ENCODE measurements at regions of chr16 and their contacts with region 1.

Region 1: DNA sequence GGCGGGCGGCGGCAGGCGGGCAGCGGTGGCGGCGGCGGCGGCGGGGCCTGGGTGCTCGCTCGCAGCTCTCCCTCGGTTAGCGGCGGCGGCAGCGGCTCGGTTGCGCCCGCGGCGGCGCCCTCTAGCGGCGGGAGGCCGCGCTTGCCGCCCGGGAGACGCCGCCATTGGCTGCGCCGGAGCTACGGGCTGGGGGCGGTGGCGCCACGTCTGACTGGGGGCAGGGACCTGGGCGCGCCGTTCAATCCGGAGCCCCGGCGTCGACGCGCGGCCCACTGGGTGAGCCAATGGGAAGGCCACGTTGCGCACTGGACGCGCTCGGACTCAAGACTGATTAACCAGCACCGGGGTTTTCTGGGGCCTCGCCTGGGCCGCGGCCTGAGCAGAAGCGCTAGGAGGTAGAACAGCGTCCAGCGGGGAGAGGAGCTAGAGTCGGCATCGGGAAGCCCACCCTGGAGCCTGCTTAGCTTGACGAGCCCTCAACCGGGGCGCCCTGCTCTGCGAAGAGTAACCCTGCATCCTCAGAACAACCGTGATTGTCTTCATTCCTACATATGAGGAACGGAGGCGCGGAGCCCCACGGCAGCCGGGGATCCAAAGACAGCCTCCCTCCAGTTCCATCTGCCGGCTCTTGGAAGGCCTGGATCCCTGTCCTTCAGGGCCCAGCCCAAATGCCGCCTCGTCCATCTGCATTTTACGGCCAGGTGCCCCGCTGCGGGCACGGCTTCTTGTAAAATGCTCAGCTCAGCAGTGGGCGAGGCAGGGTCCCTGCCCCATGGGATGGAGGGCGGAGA is at the start of gene ZC3H7A:
- DNase-seq: peak; percentile 95
- H3K4me3 Mint-ChIP-seq: peak within 1 kb of the TSS; percentile 97
- H3K27ac Mint-ChIP-seq: peak within 1 kb of the TSS; percentile 89
- H3K4me1 Mint-ChIP-seq: peaks cover 66% of the 10 kb centered on the region
- H3K27me3 Mint-ChIP-seq: no peaks in the 10 kb centered on the region
- total RNA-seq, gene ZC3H7A: 68.9 to 70.9 TPM

Region 2: GRCh38 chr16:11742539-11743307 is 54.6 kb before region 1 on chr16 and contains the start of gene TXNDC11:
- CTCF ChIA-PET with region 1: interaction called, 30 read pairs
- POLR2A ChIA-PET with region 1: interaction called, 113 read pairs
- DNase-seq: peak; percentile 99
- H3K4me3 Mint-ChIP-seq: peak within 1 kb of the TSS; percentile 86
- H3K27ac Mint-ChIP-seq: peak within 1 kb of the TSS; percentile 92
- H3K4me1 Mint-ChIP-seq: peaks cover 53% of the 10 kb centered on the region
- H3K27me3 Mint-ChIP-seq: no peaks in the 10 kb centered on the region
- total RNA-seq, gene TXNDC11: 45.3 to 46.6 TPM

Region 3: DNA sequence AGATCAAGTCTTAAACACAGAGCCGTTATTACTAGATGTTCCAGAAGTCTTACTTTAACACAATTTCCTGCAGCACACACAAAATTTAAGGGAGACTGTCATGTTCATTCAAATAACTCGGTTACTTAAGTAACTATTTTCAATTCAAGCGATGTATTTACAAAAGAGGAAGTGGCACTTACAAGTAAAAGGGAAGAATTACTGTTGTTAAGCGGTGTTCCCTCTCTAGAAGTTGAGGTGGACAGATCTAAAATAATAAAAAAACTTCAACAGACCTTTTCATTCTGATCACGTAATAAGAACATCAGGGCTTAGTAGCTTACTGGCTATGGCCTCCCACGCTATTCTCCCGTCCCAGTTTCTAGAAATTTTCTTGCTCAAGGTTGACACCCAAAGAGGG is 28.5 kb before region 1 on chr16:
- CTCF ChIA-PET with region 1: interaction called, 19 read pairs
- POLR2A ChIA-PET with region 1: interaction called, 5 read pairs
- DNase-seq: no peak
- H3K4me3 Mint-ChIP-seq: no peak overlapping the region
- H3K27ac Mint-ChIP-seq: no peak overlapping the region
- H3K4me1 Mint-ChIP-seq: peaks cover 18% of the 10 kb centered on the region
- H3K27me3 Mint-ChIP-seq: no peaks in the 10 kb centered on the region

Region 4: DNA sequence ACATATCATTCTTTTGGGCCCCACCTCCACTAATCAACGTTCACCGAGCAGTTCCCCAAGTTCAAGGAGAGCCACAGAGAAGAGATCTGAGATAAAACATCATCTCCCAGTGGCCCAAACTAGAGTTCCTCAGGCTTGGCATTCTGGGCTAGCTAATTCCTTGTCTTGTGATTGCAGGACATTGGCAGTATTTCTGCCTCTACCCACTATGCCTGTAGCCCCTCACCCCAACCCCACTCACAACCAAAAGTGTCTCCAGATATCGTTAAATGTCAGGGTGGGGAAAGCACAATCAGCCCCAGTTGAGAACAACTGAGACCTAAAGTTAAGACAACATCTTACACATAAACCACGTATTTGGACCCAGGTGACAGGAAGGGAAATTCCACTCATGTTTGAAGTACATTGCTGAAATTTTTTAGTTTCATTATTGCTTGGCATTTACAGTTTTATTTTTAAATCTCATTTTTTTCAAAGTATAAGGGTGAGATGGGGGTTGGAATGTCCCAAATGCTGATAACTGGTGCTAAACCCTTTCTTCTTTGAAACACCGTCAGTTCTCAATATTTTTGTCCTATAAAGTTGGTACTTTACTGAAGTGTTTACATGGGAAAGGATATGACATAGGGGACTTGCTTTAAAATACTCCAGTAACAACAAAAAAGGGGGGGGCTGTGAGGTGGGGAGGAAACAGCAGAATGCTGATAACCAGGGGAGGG is 13.9 kb before region 1 on chr16:
- CTCF ChIA-PET with region 1: interaction called, 52 read pairs
- POLR2A ChIA-PET with region 1: interaction called, 165 read pairs
- DNase-seq: peak; percentile 42
- H3K4me3 Mint-ChIP-seq: peak overlapping the region; percentile 72
- H3K27ac Mint-ChIP-seq: peak overlapping the region; percentile 98
- H3K4me1 Mint-ChIP-seq: peaks cover 66% of the 10 kb centered on the region
- H3K27me3 Mint-ChIP-seq: no peaks in the 10 kb centered on the region

Region 5: DNA sequence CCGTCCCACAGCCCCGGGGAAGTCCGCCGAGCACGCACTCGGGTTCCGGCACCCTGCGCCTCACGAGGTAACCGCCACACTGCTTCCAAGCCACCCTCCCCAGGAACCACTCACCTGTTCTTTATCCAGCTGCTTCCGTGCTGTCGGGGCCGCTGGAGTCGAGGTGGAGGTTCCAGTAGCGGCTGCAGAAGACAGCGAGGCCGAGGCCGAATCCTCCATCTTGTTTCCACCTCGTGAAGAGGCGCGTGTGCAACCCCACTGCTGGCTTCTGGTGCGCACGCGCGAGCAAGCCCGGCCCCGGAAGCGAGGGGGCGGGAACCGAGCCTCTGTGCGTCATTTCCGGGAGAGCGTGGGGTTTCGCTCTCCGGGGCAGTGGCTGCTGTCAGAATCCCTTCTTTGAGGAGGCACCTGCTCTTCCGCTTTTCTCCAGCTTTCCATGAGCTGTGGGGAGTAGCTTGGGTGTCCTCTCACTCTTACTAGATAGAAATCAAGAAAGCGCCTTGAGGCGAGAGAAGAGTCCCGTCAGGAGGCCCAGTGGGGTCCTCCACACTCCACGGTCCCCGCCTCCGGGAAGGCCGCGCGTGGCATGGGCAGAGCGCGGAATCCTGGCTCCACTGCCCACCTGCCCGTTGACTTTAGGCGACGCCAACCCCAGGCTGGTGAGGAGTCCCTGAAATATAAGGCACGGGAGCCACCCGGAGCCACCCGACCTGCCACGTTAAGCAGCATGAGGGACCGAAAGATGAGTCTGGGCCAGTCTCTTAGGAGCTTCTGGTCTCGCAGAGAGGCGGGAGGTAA is 54.1 kb after region 1 on chr16 and contains the start of gene RSL1D1:
- CTCF ChIA-PET with region 1: interaction called, 10 read pairs
- POLR2A ChIA-PET with region 1: interaction called, 31 read pairs
- DNase-seq: peak; percentile 94
- H3K4me3 Mint-ChIP-seq: peak within 1 kb of the TSS; percentile 97
- H3K27ac Mint-ChIP-seq: peak within 1 kb of the TSS; percentile 90
- H3K4me1 Mint-ChIP-seq: peaks cover 61% of the 10 kb centered on the region
- H3K27me3 Mint-ChIP-seq: no peaks in the 10 kb centered on the region
- total RNA-seq, gene RSL1D1: 146 to 157 TPM

Region 6: GRCh38 chr16:11915644-11916523 is 118.5 kb after region 1 on chr16 and contains the start of gene GSPT1:
- CTCF ChIA-PET with region 1: no interaction called
- POLR2A ChIA-PET with region 1: interaction called, 10 read pairs
- DNase-seq: peak; percentile 100
- H3K4me3 Mint-ChIP-seq: peak within 1 kb of the TSS; percentile 88
- H3K27ac Mint-ChIP-seq: peak within 1 kb of the TSS; percentile 93
- H3K4me1 Mint-ChIP-seq: peaks cover 34% of the 10 kb centered on the region
- H3K27me3 Mint-ChIP-seq: peaks cover 13% of the 10 kb centered on the region
- total RNA-seq, gene GSPT1: 124 to 125 TPM

Region 7: DNA sequence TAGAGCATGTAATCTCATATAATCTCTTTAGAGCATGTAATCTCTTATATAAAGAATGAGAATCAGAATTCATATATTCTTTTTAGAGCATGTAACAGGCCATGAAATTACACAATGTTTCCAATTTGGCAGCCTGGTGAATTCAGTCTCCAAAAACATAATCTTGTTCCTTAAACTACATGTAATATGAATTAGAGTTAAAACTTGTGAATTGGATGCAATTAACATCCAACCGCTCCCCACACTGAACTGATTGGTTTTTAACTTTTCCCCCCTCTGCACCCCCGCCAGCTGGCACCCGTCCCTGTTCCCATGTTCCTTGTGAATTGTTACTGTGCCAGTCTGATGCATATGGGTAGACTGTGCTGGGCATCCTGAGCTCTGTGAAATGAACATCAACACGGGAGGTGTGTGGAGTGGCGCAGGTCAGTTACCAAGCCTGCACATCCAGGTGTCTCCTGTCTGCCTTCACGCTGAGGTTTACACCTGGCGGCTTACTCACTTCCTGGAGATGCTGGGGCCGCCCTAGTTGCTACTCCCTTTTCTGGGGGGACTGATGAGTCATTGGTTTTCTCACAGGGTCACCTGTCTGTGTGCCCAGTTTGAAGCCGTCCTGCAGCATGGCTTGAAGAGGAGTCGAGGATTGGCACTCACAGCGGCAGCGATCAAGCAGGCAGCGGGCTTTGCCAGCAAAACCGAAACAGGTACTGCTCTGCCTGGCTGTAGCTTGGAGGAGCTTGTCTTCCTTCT is 229.6 kb after region 1 on chr16:
- CTCF ChIA-PET with region 1: no interaction called
- POLR2A ChIA-PET with region 1: no interaction called
- DNase-seq: no peak
- H3K4me3 Mint-ChIP-seq: no peak overlapping the region
- H3K27ac Mint-ChIP-seq: no peak overlapping the region
- H3K4me1 Mint-ChIP-seq: peaks cover 5% of the 10 kb centered on the region
- H3K27me3 Mint-ChIP-seq: no peaks in the 10 kb centered on the region

Region 8: GRCh38 chr16:12067714-12068401 is 270.5 kb after region 1 on chr16:
- CTCF ChIA-PET with region 1: interaction called, 12 read pairs
- POLR2A ChIA-PET with region 1: interaction called, 4 read pairs
- DNase-seq: peak; percentile 70
- H3K4me3 Mint-ChIP-seq: no peak overlapping the region
- H3K27ac Mint-ChIP-seq: no peak overlapping the region
- H3K4me1 Mint-ChIP-seq: peaks cover 4% of the 10 kb centered on the region
- H3K27me3 Mint-ChIP-seq: no peaks in the 10 kb centered on the region

Measured in activated CD4-positive, alpha-beta memory T cell treated with anti-CD3 and anti-CD28 coated beads, Interleukin-2, amount 10 ng/mL, durations not matched to agents 7 days and 5 days (primary cell).